ENCODE measurements at regions of chr6 and their contacts with region 1.

Region 1: GRCh38 chr6:148866657-148867268 is 119.9 kb downstream of the UST start:
- DNase-seq: peak; percentile 74
- ATAC-seq: peak; percentile 91
- H3K4me3 ChIP-seq: peak overlapping the region in 1 of 5 experiments; percentile 8
- H3K4me3 Mint-ChIP-seq: peak overlapping the region; percentile 80
- H3K27ac ChIP-seq: peak overlapping the region; percentile 48 to 57
- H3K27ac Mint-ChIP-seq: peak overlapping the region; percentile 89
- H3K4me1 ChIP-seq: peaks cover 45 to 55% of the 10 kb centered on the region in 2 donors
- H3K4me1 Mint-ChIP-seq: peaks cover 81% of the 10 kb centered on the region
- H3K27me3 ChIP-seq: no peaks in the 10 kb centered on the region
- H3K27me3 Mint-ChIP-seq: no peaks in the 10 kb centered on the region
- CTCF ChIP-seq: no peak

Region 2: GRCh38 chr6:148831064-148831463 is 35.7 kb before region 1 on chr6:
- CTCF ChIA-PET with region 1: no interaction called
- POLR2A ChIA-PET with region 1: interaction called, 3 read pairs
- intact Hi-C with region 1: loop called (anchors 5 kb)
- DNase-seq: peak; percentile 61
- ATAC-seq: peak; percentile 74
- H3K4me3 ChIP-seq: peak overlapping the region in 4 of 5 experiments; percentile 16 to 52 (median 35)
- H3K4me3 Mint-ChIP-seq: peak overlapping the region; percentile 67
- H3K27ac ChIP-seq: peak overlapping the region in 1 of 2 donors; percentile 49
- H3K27ac Mint-ChIP-seq: no peak overlapping the region
- H3K4me1 ChIP-seq: peaks cover 27 to 29% of the 10 kb centered on the region in 2 donors
- H3K4me1 Mint-ChIP-seq: peaks cover 45% of the 10 kb centered on the region
- H3K27me3 ChIP-seq: no peaks in the 10 kb centered on the region
- H3K27me3 Mint-ChIP-seq: no peaks in the 10 kb centered on the region
- CTCF ChIP-seq: no peak

Region 3: GRCh38 chr6:148846778-148847761 is 19.7 kb before region 1 on chr6:
- CTCF ChIA-PET with region 1: no interaction called
- POLR2A ChIA-PET with region 1: no interaction called
- intact Hi-C with region 1: loop called (anchors 2 kb)
- DNase-seq: no peak
- ATAC-seq: no peak
- H3K4me3 ChIP-seq: no peak overlapping the region
- H3K4me3 Mint-ChIP-seq: no peak overlapping the region
- H3K27ac ChIP-seq: no peak overlapping the region
- H3K27ac Mint-ChIP-seq: peak overlapping the region; percentile 59
- H3K4me1 ChIP-seq: peaks cover 11 to 32% of the 10 kb centered on the region in 2 donors
- H3K4me1 Mint-ChIP-seq: peaks cover 35% of the 10 kb centered on the region
- H3K27me3 ChIP-seq: no peaks in the 10 kb centered on the region
- H3K27me3 Mint-ChIP-seq: no peaks in the 10 kb centered on the region
- CTCF ChIP-seq: no peak

Region 4: GRCh38 chr6:148883270-148883669 is 16.5 kb after region 1 on chr6:
- CTCF ChIA-PET with region 1: interaction called, 3 read pairs
- POLR2A ChIA-PET with region 1: interaction called, 4 read pairs
- intact Hi-C with region 1: loop called (anchors 2 kb)
- DNase-seq: peak; percentile 23
- ATAC-seq: no peak
- H3K4me3 ChIP-seq: no peak overlapping the region
- H3K4me3 Mint-ChIP-seq: peak overlapping the region; percentile 67
- H3K27ac ChIP-seq: no peak overlapping the region
- H3K27ac Mint-ChIP-seq: peak overlapping the region; percentile 76
- H3K4me1 ChIP-seq: peaks cover 26 to 38% of the 10 kb centered on the region in 2 donors
- H3K4me1 Mint-ChIP-seq: peaks cover 31% of the 10 kb centered on the region
- H3K27me3 ChIP-seq: no peaks in the 10 kb centered on the region
- H3K27me3 Mint-ChIP-seq: no peaks in the 10 kb centered on the region
- CTCF ChIP-seq: no peak

Region 5: DNA sequence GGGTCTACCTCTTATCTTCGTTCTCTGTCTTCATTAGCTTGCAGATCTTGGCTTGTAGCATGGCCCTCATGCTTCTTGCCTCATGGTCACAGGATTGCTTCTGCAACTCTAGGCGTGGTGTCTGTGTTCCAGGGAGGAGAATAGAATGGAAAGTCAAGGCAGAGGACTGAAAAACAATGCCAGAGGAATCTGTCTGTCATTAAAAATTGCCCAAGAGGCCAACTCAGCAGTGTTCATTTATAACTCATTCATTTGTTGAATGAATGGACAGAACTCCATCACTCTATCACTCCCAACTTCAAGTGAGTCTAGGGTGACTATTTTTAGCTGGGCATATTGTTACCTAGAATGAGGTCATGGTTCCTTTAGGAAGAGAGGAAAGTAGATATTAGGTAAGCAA is 59.7 kb after region 1 on chr6:
- CTCF ChIA-PET with region 1: no interaction called
- POLR2A ChIA-PET with region 1: no interaction called
- intact Hi-C with region 1: no loop called
- DNase-seq: no peak
- ATAC-seq: no peak
- H3K4me3 ChIP-seq: no peak overlapping the region
- H3K4me3 Mint-ChIP-seq: no peak overlapping the region
- H3K27ac ChIP-seq: no peak overlapping the region
- H3K27ac Mint-ChIP-seq: no peak overlapping the region
- H3K4me1 ChIP-seq: no peaks in the 10 kb centered on the region
- H3K4me1 Mint-ChIP-seq: peaks cover 11% of the 10 kb centered on the region
- H3K27me3 ChIP-seq: no peaks in the 10 kb centered on the region
- H3K27me3 Mint-ChIP-seq: no peaks in the 10 kb centered on the region
- CTCF ChIP-seq: no peak